OCI-LY7 (cell line): ENCODE measurements at regions of chr1 and their contacts with region 1.

Region 1: DNA sequence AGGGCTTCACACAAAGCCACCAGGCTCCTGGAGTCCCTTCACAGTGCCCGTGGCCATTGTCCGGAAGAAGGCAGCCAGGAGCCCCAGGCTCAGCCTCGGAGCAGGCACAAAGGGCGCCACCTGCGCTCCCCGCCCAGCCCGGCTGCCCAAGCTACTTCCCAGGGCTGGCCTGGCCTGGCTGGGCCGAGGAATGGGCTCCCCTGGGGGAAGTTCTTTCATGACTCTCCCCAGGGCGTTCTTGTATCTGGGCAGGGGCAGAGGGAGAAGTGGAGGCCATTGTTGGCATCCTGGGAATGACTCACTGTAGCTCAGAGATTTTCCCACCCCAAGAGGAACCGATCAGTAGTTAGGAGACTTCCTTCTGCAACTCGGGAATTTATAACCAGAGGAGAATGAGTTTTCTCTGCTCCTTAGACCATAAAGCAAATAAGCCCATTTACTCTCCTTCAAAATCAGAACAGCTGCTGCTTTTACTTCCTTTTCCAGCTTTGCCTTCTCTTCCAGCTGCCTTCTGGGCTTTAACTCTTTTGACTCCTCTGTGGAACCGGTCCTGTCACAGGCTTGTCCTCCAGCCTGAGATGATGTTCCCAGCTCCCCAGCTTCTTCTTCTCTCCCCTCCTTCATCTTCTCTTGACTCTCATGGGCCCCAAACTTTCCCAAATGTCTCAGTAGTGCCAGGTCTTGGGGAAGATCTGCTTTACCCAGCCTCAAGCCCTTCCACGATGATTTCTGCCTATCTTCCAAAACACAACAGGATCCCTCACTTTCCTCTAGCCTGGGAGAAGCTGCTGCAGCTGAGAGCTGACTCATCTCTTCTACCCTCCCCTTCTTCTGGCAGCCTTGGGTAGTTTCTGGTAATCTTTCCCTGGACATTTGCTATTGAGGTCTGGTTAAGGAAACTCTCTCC is 118.7 kb upstream of the CD34 start:
- DNase-seq: no peak
- H3K4me3 ChIP-seq: no peak overlapping the region
- H3K27ac ChIP-seq: no peak overlapping the region
- H3K4me1 ChIP-seq: no peaks in the 10 kb centered on the region
- CTCF ChIP-seq: no peak

Region 2: GRCh38 chr1:207838156-207839082 is 191.2 kb before region 1 on chr1:
- CTCF ChIA-PET with region 1: no interaction called
- POLR2A ChIA-PET with region 1: no interaction called
- intact Hi-C with region 1: no loop called
- DNase-seq: no peak
- H3K4me3 ChIP-seq: no peak overlapping the region
- H3K27ac ChIP-seq: no peak overlapping the region
- H3K4me1 ChIP-seq: no peaks in the 10 kb centered on the region
- CTCF ChIP-seq: no peak

Region 3: GRCh38 chr1:208007938-208008342 is 21.7 kb before region 1 on chr1:
- CTCF ChIA-PET with region 1: no interaction called
- POLR2A ChIA-PET with region 1: no interaction called
- intact Hi-C with region 1: no loop called
- DNase-seq: no peak
- H3K4me3 ChIP-seq: no peak overlapping the region
- H3K27ac ChIP-seq: no peak overlapping the region
- H3K4me1 ChIP-seq: no peaks in the 10 kb centered on the region
- CTCF ChIP-seq: no peak

Region 4: DNA sequence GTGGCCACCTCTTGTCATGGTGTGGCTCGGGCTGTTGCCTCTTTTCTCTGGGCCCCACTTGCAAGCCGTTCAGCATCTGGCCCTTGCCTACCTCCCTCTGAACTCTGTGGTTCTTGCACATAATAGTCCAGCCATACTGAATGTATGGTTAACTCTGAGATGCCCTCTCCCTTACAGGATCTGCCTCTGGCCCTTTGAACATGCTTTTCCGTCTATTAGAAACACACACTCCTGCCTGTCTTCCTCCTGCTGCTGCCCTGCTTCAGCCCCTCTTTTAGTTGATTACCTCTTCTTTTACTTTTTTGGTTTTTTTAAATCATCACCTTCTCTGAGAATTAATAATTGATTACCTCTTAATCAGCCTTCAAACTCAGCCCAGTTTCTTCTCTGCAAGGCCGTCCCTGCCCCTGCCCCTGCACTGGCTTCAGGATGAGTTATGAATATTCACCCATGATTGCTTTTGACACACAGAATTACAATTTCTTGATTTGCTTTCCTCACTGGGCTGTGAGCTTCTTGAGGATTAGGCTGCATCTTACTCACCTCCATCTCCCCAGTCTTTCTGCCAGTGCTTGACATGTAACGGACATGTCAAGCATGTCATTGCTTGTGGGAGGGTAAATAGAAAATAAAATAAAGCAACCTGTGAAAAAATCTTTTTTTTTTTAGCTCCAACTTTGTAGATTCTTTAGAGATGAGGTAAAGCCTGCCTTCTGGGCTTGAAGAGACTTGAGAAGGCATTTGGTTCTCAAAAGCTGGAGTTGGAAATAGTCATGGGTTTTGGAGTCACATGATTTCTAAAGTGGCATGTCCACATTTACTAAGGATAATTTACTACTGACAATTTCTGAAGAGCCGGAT is 56.3 kb after region 1 on chr1:
- CTCF ChIA-PET with region 1: no interaction called
- POLR2A ChIA-PET with region 1: no interaction called
- intact Hi-C with region 1: loop called (anchors 2 kb)
- DNase-seq: no peak
- H3K4me3 ChIP-seq: no peak overlapping the region
- H3K27ac ChIP-seq: no peak overlapping the region
- H3K4me1 ChIP-seq: no peaks in the 10 kb centered on the region
- CTCF ChIP-seq: no peak

Region 5: GRCh38 chr1:208587110-208587509 is 557.5 kb after region 1 on chr1:
- CTCF ChIA-PET with region 1: no interaction called
- POLR2A ChIA-PET with region 1: no interaction called
- intact Hi-C with region 1: no loop called
- DNase-seq: no peak
- H3K4me3 ChIP-seq: no peak overlapping the region
- H3K27ac ChIP-seq: no peak overlapping the region
- H3K4me1 ChIP-seq: no peaks in the 10 kb centered on the region
- CTCF ChIP-seq: no peak

Region 6: DNA sequence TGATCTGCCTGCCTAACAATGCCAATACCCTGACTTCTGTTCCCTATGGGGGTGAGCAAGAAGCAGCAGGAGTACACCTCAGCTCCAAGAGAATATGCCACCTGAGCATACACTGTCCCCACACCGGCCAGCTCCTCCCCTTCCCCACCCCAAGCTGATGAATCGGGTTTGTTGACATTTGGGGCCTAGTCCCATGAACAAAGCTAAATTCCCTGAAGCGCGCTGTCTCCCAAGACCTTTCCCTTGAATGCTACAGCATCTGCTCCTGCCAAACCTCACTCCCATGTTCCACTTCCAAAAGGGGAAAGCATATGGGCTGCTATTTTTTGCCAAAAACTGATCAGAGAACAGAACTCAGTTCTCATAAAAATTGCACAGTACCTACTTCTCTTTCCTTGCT is 1333.5 kb after region 1 on chr1:
- CTCF ChIA-PET with region 1: no interaction called
- POLR2A ChIA-PET with region 1: no interaction called
- intact Hi-C with region 1: no loop called
- DNase-seq: no peak
- H3K4me3 ChIP-seq: no peak overlapping the region
- H3K27ac ChIP-seq: no peak overlapping the region
- H3K4me1 ChIP-seq: no peaks in the 10 kb centered on the region
- CTCF ChIP-seq: no peak